ENCODE measurements at regions of chr2 and their contacts with region 1.

Region 1: DNA sequence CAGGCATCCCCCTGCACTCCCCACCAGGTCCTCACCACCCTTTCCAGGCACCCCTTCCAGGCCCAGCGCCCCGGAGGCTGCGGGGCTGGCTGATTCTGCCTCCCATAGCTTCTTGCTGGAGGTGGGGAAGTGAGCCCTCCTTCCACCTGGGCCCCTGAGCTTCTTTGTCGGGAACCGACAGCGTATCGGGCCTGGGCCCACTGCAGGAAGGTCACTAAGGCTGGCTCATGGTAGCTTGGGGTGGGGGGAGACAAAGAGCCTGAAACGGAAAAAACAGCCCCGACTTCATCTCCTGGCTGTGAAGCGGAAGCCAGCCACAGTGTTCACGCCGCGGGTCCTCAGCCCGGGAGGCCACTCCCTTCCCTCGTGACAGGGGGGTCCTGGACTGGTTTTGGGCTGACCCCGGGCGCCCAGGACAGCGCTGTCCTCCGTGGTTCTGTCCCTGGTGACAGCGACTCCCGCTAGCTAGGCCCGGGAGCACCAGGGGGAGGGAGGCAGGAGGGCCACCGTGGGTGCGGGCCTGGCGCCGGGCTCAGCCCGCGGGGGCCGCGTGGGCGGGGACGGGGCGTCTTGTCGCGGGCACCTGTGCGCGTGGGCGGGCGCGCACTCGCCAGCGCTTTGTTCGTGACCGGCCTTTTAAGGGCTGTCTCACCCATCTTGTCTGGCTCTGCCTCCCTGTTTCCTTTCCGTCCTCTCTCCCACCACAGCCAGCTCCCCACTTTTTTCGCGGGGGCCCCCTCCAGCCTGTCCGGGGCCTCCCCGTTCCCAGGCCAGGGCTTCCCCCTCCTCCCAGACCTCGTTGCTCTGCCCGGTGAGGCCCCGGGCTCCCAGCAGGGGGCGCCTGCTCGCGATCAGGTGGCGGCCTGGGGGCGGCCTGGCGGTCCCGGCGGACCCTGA is 64.9 kb downstream of the DNMT3A start:
- DNase-seq: peak; percentile 70
- ATAC-seq: peak; percentile 13
- H3K4me3 Mint-ChIP-seq: peak overlapping the region; percentile 67
- H3K27ac Mint-ChIP-seq: peak overlapping the region; percentile 76
- H3K4me1 Mint-ChIP-seq: peaks cover 88% of the 10 kb centered on the region
- H3K27me3 Mint-ChIP-seq: no peaks in the 10 kb centered on the region
- CTCF ChIP-seq: no peak

Region 2: DNA sequence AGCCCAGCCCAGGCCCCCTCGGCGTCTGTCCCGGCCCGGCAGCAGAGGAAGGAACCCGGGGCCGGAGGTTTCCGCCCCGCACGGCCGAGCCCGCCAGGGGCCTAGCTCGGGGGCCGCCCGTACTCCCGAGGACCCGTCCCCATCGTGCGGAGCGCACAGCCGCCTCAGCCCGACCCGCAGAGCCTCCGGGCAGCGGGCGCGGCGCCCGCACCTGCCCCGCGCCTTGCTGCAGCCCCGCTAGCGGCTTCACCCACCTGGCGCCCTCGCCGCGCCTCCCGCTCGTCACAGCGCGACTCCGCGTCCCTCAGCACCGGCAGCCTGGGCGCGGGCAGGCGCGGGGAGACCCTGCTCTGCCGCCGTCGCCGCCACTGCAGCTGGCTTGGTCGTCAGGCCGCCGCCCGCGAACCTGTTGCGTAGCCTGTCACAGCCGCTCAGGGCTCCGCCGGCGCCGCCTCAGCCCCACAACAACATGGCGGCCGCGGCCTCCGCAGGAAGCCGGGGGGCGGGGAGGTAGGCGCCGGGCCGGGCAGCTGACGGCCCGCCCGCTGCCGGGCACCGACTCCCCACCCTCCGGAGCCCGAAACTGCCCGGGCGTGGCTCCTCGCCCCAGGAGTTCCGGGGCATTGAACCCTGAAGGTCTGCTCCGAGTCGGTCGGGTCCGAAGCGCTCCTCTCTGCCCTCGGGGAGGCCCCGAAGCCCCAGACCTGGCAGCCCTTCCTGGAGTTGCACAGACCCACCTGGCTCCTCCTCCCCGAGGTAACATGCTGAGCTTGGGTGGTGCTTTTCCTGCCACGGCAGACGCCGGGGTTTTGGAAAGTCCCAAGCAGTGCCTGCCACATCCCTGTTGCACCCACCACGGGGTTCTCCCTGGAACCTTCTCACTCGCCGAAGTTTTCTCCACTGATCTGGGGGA is 916.5 kb before region 1 on chr2 and contains the start of gene ITSN2:
- CTCF ChIA-PET with region 1: no interaction called
- POLR2A ChIA-PET with region 1: interaction called, 3 read pairs
- intact Hi-C with region 1: loop called (anchors 10 kb)
- DNase-seq: peak; percentile 88
- ATAC-seq: peak; percentile 85
- H3K4me3 Mint-ChIP-seq: peak within 1 kb of the TSS; percentile 91
- H3K27ac Mint-ChIP-seq: peak within 1 kb of the TSS; percentile 97
- H3K4me1 Mint-ChIP-seq: peaks cover 50% of the 10 kb centered on the region
- H3K27me3 Mint-ChIP-seq: no peaks in the 10 kb centered on the region
- CTCF ChIP-seq: no peak
- total RNA-seq, gene ITSN2: 147 and 156 TPM in 2 replicates

Region 3: GRCh38 chr2:25215948-25216679 is 60.7 kb before region 1 on chr2:
- CTCF ChIA-PET with region 1: no interaction called
- POLR2A ChIA-PET with region 1: interaction called, 6 read pairs
- intact Hi-C with region 1: loop called (anchors 2 kb)
- DNase-seq: peak; percentile 85
- ATAC-seq: peak; percentile 94
- H3K4me3 Mint-ChIP-seq: peak overlapping the region; percentile 72
- H3K27ac Mint-ChIP-seq: peak overlapping the region; percentile 32
- H3K4me1 Mint-ChIP-seq: peaks cover 21% of the 10 kb centered on the region
- H3K27me3 Mint-ChIP-seq: no peaks in the 10 kb centered on the region
- CTCF ChIP-seq: no peak

Region 4: DNA sequence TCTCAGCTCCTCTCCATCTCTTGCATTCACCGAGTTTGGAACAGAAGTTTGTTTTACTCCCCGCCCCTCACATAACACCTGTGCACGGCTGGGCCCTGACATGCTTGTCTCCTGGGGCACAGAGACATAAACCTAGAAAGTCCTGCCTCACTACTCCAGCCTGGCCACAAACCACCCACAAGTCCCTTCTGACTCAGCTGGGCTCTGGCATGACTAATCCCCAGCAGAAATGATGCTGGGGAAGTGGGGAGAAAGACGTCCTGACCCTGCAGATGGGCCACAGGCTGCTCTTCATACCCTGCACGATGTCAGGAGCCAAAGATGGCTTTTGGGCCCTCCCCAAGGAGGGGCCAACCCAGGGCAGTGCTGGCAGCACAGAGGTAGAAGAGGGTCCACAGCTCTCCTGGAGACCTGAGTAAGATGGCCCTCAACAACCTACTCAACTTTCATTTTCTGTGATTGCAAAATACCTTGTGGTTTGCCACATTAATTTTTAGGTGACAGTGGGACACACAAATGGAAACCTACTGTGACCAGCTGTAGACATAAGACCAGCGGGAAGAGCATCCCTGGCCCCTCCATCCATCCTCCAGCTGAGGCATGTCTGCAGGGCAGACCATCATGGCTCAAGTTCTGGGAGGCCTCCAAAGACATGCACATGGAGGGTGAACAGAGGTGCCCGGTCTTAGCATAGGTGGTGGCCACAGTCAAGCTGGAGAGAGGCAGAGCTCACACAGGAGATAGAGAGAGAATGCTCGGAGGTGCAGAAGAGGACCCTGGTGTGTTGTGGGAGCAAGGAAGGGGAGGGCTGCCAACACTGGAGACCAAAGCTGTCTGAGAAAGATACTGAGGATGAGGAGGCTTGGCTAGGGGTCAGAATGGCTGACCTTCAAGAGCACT is 24.9 kb after region 1 on chr2:
- CTCF ChIA-PET with region 1: interaction called, 20 read pairs
- POLR2A ChIA-PET with region 1: interaction called, 20 read pairs
- intact Hi-C with region 1: loop called (anchors 1 kb)
- DNase-seq: peak; percentile 61
- ATAC-seq: peak; percentile 95
- H3K4me3 Mint-ChIP-seq: peak overlapping the region; percentile 42
- H3K27ac Mint-ChIP-seq: peak overlapping the region; percentile 46
- H3K4me1 Mint-ChIP-seq: peaks cover 39% of the 10 kb centered on the region
- H3K27me3 Mint-ChIP-seq: no peaks in the 10 kb centered on the region
- CTCF ChIP-seq: no peak

Region 5: DNA sequence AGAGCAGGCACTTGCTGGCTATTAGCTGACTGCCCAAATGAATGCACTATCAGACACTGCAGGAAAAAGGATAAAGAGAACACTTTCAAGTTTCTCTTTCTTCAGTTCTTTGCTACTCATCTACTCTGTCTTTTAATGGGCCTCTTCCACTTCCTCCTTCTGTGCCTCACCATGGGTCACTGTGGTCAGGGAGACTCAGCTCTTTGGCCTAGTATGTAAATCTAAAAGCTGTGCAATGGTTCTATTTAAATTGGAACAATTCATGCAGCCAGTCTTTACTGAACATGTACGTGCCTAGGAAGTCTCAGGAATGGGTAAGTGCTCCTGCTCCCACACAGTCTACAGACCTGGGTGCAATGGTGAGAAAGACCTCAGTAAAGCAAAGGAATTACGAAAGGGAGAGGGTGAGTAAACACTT is 144.0 kb after region 1 on chr2:
- CTCF ChIA-PET with region 1: no interaction called
- POLR2A ChIA-PET with region 1: no interaction called
- intact Hi-C with region 1: loop called (anchors 5 kb)
- DNase-seq: no peak
- ATAC-seq: peak; percentile 29
- H3K4me3 Mint-ChIP-seq: peak overlapping the region; percentile 93
- H3K27ac Mint-ChIP-seq: peak overlapping the region; percentile 95
- H3K4me1 Mint-ChIP-seq: peaks cover 97% of the 10 kb centered on the region
- H3K27me3 Mint-ChIP-seq: no peaks in the 10 kb centered on the region
- CTCF ChIP-seq: no peak

Region 6: DNA sequence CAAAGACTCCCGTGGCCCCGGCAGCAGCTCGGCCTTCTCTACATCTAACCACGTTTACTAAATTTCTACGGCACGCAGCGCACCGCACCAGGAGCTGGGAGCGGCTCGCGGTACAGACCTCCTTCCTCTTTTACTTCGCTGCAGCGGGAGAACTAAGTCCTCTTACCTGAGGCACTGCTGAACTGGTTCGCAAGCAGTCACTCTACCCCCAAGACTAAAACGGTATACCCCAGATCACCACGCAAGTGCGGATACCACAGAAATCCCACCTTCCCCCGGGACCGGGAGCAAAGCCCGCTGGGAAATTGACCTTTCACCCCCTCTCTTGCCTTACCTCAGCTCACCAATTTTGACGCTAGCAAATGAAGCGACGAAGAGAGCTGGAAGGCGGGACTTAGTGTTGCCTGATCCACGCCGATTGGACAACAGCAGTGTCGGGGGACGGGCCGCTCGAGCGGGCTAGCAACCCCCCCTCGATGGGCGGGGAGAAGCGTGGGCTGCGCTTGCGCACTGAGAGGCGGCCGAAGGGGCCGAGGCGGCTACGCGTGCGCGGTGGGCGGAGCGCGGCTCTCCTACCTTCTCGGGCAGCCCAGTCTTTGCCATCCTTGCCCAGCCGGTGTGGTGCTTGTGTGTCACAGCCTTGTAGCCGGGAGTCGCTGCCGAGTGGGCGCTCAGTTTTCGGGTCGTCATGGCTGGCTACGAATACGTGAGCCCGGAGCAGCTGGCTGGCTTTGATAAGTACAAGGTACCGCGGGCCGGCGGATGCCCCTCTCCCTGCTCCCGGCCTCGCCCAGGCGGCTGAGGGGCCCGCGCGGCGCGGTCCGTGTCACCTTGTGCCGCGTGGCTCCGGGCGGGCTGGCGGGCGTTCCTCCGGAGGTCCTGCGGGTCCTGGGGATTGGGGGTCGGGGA is 1069.0 kb after region 1 on chr2 and contains the start of gene SELENOI:
- CTCF ChIA-PET with region 1: no interaction called
- POLR2A ChIA-PET with region 1: no interaction called
- intact Hi-C with region 1: loop called (anchors 5 kb)
- DNase-seq: peak; percentile 99
- ATAC-seq: peak; percentile 96
- H3K4me3 Mint-ChIP-seq: peak within 1 kb of the TSS; percentile 95
- H3K27ac Mint-ChIP-seq: peak within 1 kb of the TSS; percentile 95
- H3K4me1 Mint-ChIP-seq: peaks cover 42% of the 10 kb centered on the region
- H3K27me3 Mint-ChIP-seq: no peaks in the 10 kb centered on the region
- CTCF ChIP-seq: no peak
- total RNA-seq, gene SELENOI: 20.2 and 21.1 TPM in 2 replicates